CD4-positive, alpha-beta T cell (primary cell): ENCODE measurements at regions of chr3 and their contacts with region 1.

Region 1: DNA sequence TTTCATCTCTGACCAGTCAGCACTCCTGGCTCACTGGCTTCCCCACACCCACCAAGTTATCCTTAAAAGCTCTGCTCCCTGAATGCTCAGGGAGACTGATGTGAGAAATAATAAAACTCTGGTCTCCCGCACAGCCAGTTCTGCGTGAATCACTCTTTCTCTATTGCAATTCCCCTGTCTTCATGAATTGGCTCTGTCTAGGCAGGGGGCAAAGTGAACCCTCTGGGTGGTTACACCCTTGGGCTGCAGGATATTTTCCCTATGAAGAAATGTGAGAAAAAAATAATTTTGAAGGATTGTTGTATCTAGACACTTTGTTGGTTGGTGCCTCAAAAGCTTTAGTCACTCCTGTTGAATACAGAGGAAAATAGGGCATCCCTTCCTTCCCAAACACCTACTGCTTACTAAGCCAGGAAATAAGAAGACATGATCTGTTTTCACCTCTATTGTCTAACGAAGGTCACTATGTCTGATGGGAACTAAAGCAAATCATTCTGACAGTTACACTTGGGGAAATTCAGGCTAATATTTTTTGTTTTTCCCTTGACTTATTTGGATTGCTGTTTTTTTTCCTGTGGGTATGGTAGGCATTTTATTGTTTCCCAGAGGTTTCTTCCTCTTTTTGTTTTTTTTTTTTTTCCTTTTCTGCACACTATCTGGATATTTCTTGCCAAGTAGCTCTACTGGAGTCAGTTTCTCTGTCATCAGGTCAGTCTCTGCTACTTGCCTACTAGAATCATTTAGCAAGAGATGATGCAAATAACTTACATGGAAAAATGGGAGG is 15.3 kb upstream of the TNFSF10 start:
- DNase-seq: no peak
- ATAC-seq: no peak
- H3K4me3 ChIP-seq: no peak overlapping the region
- H3K4me3 Mint-ChIP-seq: peak overlapping the region; percentile 2
- H3K27ac ChIP-seq: no peak overlapping the region
- H3K27ac Mint-ChIP-seq: peak overlapping the region; percentile 68
- H3K4me1 ChIP-seq: peaks cover 25% of the 10 kb centered on the region
- H3K4me1 Mint-ChIP-seq: peaks cover 40% of the 10 kb centered on the region
- H3K27me3 ChIP-seq: no peaks in the 10 kb centered on the region
- H3K27me3 Mint-ChIP-seq: no peaks in the 10 kb centered on the region
- CTCF ChIP-seq: no peak

Region 2: DNA sequence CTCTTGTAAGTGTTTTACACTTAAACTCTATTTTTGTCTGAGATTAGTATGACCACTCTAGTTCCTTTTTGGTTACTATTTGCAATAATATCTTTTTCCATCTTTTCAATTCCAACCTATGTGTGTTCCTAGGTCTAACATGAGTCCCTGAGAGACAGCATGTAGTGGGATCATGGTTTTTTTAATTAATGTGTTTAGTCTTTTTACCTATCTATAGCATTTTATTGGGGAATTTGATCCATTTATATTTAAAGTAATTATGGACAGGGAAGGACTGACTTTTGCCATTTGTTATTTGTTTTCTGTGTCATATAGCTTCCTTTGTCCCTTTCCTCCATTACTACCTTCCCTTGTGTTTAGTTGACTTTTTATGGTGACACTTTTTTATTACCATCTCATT is 37.0 kb before region 1 on chr3:
- CTCF ChIA-PET with region 1: no interaction called
- POLR2A ChIA-PET with region 1: no interaction called
- intact Hi-C with region 1: loop called in 1 of 2 experiments (anchors 5 kb)
- DNase-seq: no peak
- ATAC-seq: no peak
- H3K4me3 ChIP-seq: no peak overlapping the region
- H3K4me3 Mint-ChIP-seq: no peak overlapping the region
- H3K27ac ChIP-seq: no peak overlapping the region
- H3K27ac Mint-ChIP-seq: no peak overlapping the region
- H3K4me1 ChIP-seq: no peaks in the 10 kb centered on the region
- H3K4me1 Mint-ChIP-seq: no peaks in the 10 kb centered on the region
- H3K27me3 ChIP-seq: no peaks in the 10 kb centered on the region
- H3K27me3 Mint-ChIP-seq: no peaks in the 10 kb centered on the region
- CTCF ChIP-seq: no peak

Region 3: DNA sequence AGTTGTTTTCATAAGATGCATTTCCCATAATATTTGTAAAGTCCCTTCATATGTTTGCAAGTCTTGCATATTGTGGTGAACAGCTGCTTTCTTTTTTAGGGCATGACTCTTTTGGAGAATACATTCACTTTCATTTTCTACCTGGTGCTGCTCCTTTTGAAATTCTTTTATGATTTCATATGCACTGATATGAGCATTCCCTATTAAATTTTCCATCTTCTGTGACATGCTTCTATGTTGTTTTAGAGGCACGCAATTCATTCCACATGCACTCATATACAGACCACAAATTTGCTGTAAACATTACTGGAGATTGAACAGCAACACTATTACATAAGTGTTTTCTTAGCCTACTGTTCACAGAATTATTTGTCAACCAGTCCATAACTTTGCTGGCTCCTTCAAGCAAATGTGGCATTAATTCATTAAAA is 77.5 kb after region 1 on chr3:
- CTCF ChIA-PET with region 1: no interaction called
- POLR2A ChIA-PET with region 1: no interaction called
- intact Hi-C with region 1: no loop called
- DNase-seq: peak in 1 of 14 experiments; percentile 51
- ATAC-seq: no peak
- H3K4me3 ChIP-seq: no peak overlapping the region
- H3K4me3 Mint-ChIP-seq: peak overlapping the region; percentile 75
- H3K27ac ChIP-seq: no peak overlapping the region
- H3K27ac Mint-ChIP-seq: no peak overlapping the region
- H3K4me1 ChIP-seq: peaks cover 11% of the 10 kb centered on the region
- H3K4me1 Mint-ChIP-seq: peaks cover 17% of the 10 kb centered on the region
- H3K27me3 ChIP-seq: no peaks in the 10 kb centered on the region
- H3K27me3 Mint-ChIP-seq: no peaks in the 10 kb centered on the region
- CTCF ChIP-seq: no peak

Region 4: DNA sequence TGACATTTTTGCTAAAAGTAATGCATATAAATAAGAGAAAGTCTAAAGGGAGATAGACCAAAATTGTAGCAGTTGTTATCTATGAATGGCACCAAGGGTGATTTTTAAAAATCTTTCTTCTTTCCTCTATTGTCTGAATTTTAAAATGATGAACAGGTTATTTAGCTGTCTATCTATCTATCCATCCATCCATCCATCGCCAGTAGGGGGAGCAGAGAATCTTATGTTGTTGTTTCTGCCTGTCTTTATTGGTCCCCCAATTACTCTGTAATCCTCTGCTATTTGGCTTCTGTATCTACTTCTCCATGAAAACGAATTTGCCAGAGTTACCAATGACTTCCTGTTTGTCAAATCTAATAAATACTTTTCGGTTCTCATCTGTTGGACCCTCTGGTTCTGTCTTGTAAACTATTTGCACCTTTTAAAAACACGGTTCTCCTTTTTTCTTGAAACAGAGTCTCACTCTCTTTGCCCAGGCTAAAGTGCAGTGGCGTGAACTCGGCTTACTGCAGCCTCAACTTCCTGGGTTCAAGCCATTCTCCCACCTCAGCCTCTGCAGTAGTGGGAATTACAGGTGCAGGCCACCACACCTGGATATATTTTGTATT is 297.9 kb after region 1 on chr3:
- CTCF ChIA-PET with region 1: no interaction called
- POLR2A ChIA-PET with region 1: no interaction called
- intact Hi-C with region 1: no loop called
- DNase-seq: peak in 4 of 14 experiments; percentile 4 to 14 (median 10)
- ATAC-seq: no peak
- H3K4me3 ChIP-seq: no peak overlapping the region
- H3K4me3 Mint-ChIP-seq: no peak overlapping the region
- H3K27ac ChIP-seq: no peak overlapping the region
- H3K27ac Mint-ChIP-seq: no peak overlapping the region
- H3K4me1 ChIP-seq: no peaks in the 10 kb centered on the region
- H3K4me1 Mint-ChIP-seq: no peaks in the 10 kb centered on the region
- H3K27me3 ChIP-seq: peaks cover 0 to 4% of the 10 kb centered on the region in 2 experiments
- H3K27me3 Mint-ChIP-seq: peaks cover 8% of the 10 kb centered on the region
- CTCF ChIP-seq: peak; percentile 38

Region 5: GRCh38 chr3:172973799-172974198 is 435.2 kb after region 1 on chr3:
- CTCF ChIA-PET with region 1: no interaction called
- POLR2A ChIA-PET with region 1: no interaction called
- intact Hi-C with region 1: no loop called
- DNase-seq: no peak
- ATAC-seq: no peak
- H3K4me3 ChIP-seq: no peak overlapping the region
- H3K4me3 Mint-ChIP-seq: no peak overlapping the region
- H3K27ac ChIP-seq: no peak overlapping the region
- H3K27ac Mint-ChIP-seq: no peak overlapping the region
- H3K4me1 ChIP-seq: no peaks in the 10 kb centered on the region
- H3K4me1 Mint-ChIP-seq: no peaks in the 10 kb centered on the region
- H3K27me3 ChIP-seq: no peaks in the 10 kb centered on the region
- H3K27me3 Mint-ChIP-seq: no peaks in the 10 kb centered on the region
- CTCF ChIP-seq: no peak